ENCODE measurements at regions of chr3 and their contacts with region 1.

Region 1: DNA sequence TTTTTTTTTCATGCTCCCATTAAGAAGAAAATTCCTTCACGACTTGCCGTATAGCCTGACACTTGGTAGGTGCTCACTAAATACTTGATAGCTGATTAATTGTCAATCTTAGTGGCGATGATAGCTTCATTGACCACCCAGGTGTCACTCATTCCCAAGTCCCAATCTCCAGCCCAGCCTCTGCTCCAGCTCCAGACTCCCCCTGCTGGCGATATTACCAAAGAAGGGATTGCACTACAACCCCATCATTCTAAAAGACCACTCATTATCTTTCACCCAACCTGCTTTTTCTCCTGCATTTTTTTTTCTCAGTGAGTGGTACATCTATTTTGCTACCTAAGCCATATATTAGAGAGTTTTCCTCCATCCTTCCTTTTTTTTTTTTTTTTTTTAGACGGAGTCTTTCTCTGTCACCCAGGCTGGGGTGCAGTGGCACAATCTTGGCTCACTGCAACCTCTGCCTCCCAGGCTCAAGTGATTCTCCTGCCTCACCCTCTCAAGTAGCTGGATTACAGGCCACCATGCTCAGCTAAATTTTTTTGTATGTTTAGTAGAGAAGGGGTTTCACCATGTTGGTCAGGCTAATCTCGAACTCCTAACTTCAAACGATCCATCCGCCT is 19.5 kb upstream of the COMMD2 start:
- DNase-seq: peak; percentile 56
- H3K4me3 Mint-ChIP-seq: no peak overlapping the region
- H3K27ac Mint-ChIP-seq: no peak overlapping the region
- H3K4me1 Mint-ChIP-seq: no peaks in the 10 kb centered on the region
- H3K27me3 Mint-ChIP-seq: no peaks in the 10 kb centered on the region
- CTCF ChIP-seq: peak; percentile 81

Region 2: GRCh38 chr3:149494022-149494758 is 277.6 kb before region 1 on chr3:
- CTCF ChIA-PET with region 1: interaction called, 11 read pairs
- POLR2A ChIA-PET with region 1: no interaction called
- intact Hi-C with region 1: loop called (anchors 1 kb)
- DNase-seq: peak; percentile 73
- H3K4me3 Mint-ChIP-seq: no peak overlapping the region
- H3K27ac Mint-ChIP-seq: no peak overlapping the region
- H3K4me1 Mint-ChIP-seq: no peaks in the 10 kb centered on the region
- H3K27me3 Mint-ChIP-seq: peaks cover 15% of the 10 kb centered on the region
- CTCF ChIP-seq: peak; percentile 77

Region 3: DNA sequence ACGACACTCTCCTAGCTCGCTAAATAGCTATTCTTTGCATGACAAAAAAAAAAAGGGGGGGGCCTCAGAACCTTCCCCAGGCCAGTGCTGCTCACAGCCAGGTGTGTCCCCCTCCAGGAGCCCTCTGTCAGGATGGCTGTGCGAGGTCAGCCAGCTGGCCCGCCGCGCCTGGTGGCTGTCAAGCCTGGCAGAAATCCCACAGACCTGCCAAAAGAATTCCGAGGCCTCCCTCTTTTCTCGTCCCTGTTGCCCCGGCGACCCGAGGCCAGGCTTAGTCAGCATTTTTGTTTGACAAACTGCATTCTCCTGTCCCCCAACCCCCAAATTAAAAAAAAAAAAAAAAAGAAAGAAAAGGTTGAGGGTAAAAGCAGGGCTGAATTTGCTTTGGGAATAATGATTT is 235.3 kb before region 1 on chr3:
- CTCF ChIA-PET with region 1: interaction called, 12 read pairs
- POLR2A ChIA-PET with region 1: no interaction called
- intact Hi-C with region 1: no loop called
- DNase-seq: peak; percentile 27
- H3K4me3 Mint-ChIP-seq: peak overlapping the region; percentile 31
- H3K27ac Mint-ChIP-seq: peak overlapping the region; percentile 67
- H3K4me1 Mint-ChIP-seq: peaks cover 48% of the 10 kb centered on the region
- H3K27me3 Mint-ChIP-seq: no peaks in the 10 kb centered on the region
- CTCF ChIP-seq: no peak

Region 4: DNA sequence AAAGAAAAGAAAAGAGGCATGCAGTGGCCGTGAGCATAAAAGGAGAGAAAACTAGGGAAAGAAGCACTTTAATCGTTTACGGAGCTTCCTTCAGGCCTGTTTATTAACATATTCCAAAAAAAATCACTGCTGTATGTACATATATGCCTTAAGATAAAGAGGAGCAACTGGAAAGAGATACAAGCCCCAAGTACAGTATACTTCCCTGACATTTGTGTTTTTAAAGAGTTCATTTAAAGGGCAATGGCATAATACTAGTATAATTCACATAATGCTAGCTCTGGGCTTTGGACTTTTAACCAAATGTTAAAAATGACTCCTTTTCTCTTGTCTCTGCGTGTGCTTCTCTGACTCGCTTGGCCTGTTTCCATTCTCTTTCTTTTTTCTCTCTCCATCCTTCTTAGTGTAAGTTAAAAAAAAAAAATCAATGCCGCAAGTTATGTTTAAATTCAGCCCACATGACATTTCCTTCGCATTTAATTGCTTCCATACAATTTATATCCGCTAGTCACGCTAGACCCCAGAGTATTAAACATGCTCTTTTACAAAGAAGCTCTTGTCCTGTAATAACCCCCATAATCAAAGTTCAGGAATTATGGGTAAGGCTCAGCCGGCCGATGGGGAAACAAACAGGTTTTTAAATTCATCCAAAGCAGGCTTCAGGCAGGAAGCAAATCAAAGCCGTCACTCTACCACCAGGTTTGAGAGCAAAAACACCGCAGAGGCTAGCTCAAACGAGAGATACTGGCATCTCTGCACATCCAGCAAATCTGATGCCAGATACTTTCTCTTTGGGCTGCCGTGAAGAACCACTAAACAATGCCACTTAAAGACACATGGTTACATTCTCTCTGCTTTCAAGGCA is 133.3 kb before region 1 on chr3:
- CTCF ChIA-PET with region 1: no interaction called
- POLR2A ChIA-PET with region 1: no interaction called
- intact Hi-C with region 1: no loop called
- DNase-seq: no peak
- H3K4me3 Mint-ChIP-seq: no peak overlapping the region
- H3K27ac Mint-ChIP-seq: peak overlapping the region; percentile 51
- H3K4me1 Mint-ChIP-seq: peaks cover 20% of the 10 kb centered on the region
- H3K27me3 Mint-ChIP-seq: no peaks in the 10 kb centered on the region
- CTCF ChIP-seq: no peak

Region 5: GRCh38 chr3:149783576-149783975 is 11.8 kb after region 1 on chr3:
- CTCF ChIA-PET with region 1: interaction called, 51 read pairs
- POLR2A ChIA-PET with region 1: interaction called, 3 read pairs
- intact Hi-C with region 1: no loop called
- DNase-seq: peak; percentile 32
- H3K4me3 Mint-ChIP-seq: no peak overlapping the region
- H3K27ac Mint-ChIP-seq: peak overlapping the region; percentile 96
- H3K4me1 Mint-ChIP-seq: peaks cover 17% of the 10 kb centered on the region
- H3K27me3 Mint-ChIP-seq: no peaks in the 10 kb centered on the region
- CTCF ChIP-seq: no peak

Region 6: DNA sequence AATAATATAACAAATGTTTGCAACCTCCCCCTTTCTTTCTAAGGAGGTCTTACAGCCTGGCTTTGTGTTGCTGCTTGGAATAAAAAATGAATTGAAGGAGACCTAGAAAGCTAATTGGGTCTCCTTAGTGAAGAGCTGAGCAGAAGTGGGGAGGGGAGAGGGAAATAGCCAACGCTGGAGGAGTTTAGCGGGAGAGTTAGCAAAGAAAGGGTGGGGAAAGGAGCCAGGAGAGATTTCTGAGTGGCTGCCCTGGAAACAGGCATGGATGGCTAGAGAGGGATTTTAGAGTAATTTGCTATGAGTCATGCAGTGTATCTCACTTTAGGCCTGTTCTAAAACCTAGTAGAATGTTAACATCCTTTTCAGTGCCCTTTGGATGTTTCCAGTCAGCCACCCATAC is 244.1 kb after region 1 on chr3:
- CTCF ChIA-PET with region 1: no interaction called
- POLR2A ChIA-PET with region 1: no interaction called
- intact Hi-C with region 1: no loop called
- DNase-seq: no peak
- H3K4me3 Mint-ChIP-seq: no peak overlapping the region
- H3K27ac Mint-ChIP-seq: no peak overlapping the region
- H3K4me1 Mint-ChIP-seq: peaks cover 5% of the 10 kb centered on the region
- H3K27me3 Mint-ChIP-seq: no peaks in the 10 kb centered on the region
- CTCF ChIP-seq: no peak

Region 7: GRCh38 chr3:150238998-150239619 is 467.3 kb after region 1 on chr3:
- CTCF ChIA-PET with region 1: no interaction called
- POLR2A ChIA-PET with region 1: no interaction called
- intact Hi-C with region 1: no loop called
- DNase-seq: peak; percentile 60
- H3K4me3 Mint-ChIP-seq: no peak overlapping the region
- H3K27ac Mint-ChIP-seq: peak overlapping the region; percentile 83
- H3K4me1 Mint-ChIP-seq: peaks cover 27% of the 10 kb centered on the region
- H3K27me3 Mint-ChIP-seq: no peaks in the 10 kb centered on the region
- CTCF ChIP-seq: peak; percentile 32

Measured in MCF 10A (cell line).